Psoas muscle (tissue), 8 donors: ENCODE measurements at regions of chr19 and their contacts with region 1.

Region 1: GRCh38 chr19:45250832-45251451 is at the start of gene MARK4:
- DNase-seq: peak; percentile 64 to 77
- ATAC-seq: peak; percentile 66 to 78 (median 73)
- H3K4me3 ChIP-seq: peak within 1 kb of the TSS; percentile 88
- H3K27ac ChIP-seq: peak within 1 kb of the TSS; percentile 66
- H3K4me1 ChIP-seq: peaks cover 16% of the 10 kb centered on the region
- H3K27me3 ChIP-seq: no peaks in the 10 kb centered on the region
- CTCF ChIP-seq: no peak
- total RNA-seq, gene MARK4: 29.7 to 37.7 (median 34.4) TPM

Region 2: DNA sequence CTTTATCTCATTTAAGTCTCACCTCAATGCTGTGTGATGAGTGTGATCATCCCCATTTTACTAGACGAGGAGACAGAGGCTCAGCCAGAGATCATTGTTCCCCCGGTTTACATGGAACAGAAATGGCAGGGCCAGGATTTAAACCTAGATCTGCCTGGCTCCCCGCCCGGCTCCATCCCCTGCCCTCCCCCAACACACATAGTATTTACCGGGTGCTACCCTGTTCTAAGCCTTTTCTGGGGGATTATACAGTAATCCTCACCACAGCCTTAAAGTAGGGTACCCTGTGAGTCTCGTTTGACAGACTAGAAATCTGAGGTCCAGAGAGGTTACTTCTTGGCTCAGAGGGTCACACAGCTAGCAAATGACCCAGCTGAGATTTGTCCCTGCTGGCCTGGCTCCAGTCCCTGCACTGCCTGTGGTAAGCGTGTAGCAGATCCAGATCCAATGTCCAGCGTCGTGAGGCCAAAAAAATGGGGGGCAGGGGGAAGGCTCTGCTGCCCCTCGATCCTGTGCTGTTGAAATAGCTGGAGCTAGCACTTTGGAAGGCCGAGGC is 85.8 kb after region 1 on chr19:
- intact Hi-C with region 1: loop called (anchors 5 kb)
- DNase-seq: no peak
- ATAC-seq: no peak
- H3K4me3 ChIP-seq: no peak overlapping the region
- H3K27ac ChIP-seq: no peak overlapping the region
- H3K4me1 ChIP-seq: no peaks in the 10 kb centered on the region
- H3K27me3 ChIP-seq: peaks cover 0 to 29% (median 6%) of the 10 kb centered on the region in 3 donors
- CTCF ChIP-seq: no peak